ENCODE measurements at regions of chr14 and their contacts with region 1.

Region 1: GRCh38 chr14:78959674-78960264 is 789.6 kb downstream of the NRXN3 start:
- DNase-seq: peak; percentile 49 to 86
- H3K4me3 ChIP-seq: no peak overlapping the region
- H3K27ac ChIP-seq: no peak overlapping the region
- H3K4me1 ChIP-seq: no peaks in the 10 kb centered on the region
- H3K27me3 ChIP-seq: no peaks in the 10 kb centered on the region
- CTCF ChIP-seq: peak; percentile 99

Region 2: GRCh38 chr14:78974691-78975090 is 14.9 kb after region 1 on chr14:
- CTCF ChIA-PET with region 1: interaction called, 11 read pairs
- POLR2A ChIA-PET with region 1: no interaction called
- intact Hi-C with region 1: no loop called
- DNase-seq: peak in 1 of 2 experiments; percentile 83
- H3K4me3 ChIP-seq: no peak overlapping the region
- H3K27ac ChIP-seq: 0 out of 2 replicates have a peak overlapping the region, but pooled peaks have one; percentile 5
- H3K4me1 ChIP-seq: peaks cover 11% of the 10 kb centered on the region
- H3K27me3 ChIP-seq: no peaks in the 10 kb centered on the region
- CTCF ChIP-seq: no peak

Region 3: DNA sequence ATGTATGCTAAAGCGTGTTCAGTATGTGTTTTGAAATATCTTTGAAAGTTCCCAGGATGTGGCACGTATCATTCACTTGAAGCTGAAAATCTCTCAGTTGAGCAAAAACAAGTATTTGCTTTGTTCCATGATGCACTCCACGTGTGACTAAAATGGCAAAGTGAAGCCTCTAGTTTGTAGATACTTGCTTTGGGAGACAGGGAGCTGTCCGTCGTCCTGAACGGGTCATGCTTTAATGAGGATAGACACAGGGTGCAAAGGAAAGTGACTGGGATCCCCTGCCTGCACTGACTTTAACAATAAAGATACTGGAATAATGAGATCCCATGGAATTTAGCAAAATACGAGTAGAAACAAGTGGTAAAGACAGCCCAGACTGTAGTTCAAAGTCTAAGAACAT is 201.8 kb after region 1 on chr14:
- CTCF ChIA-PET with region 1: no interaction called
- POLR2A ChIA-PET with region 1: no interaction called
- intact Hi-C with region 1: no loop called
- DNase-seq: peak in 1 of 2 experiments; percentile 1
- H3K4me3 ChIP-seq: no peak overlapping the region
- H3K27ac ChIP-seq: no peak overlapping the region
- H3K4me1 ChIP-seq: no peaks in the 10 kb centered on the region
- H3K27me3 ChIP-seq: no peaks in the 10 kb centered on the region
- CTCF ChIP-seq: no peak

Region 4: GRCh38 chr14:80784820-80785219 is 1825.1 kb after region 1 on chr14:
- CTCF ChIA-PET with region 1: no interaction called
- POLR2A ChIA-PET with region 1: interaction called, 10 read pairs
- intact Hi-C with region 1: no loop called
- DNase-seq: no peak
- H3K4me3 ChIP-seq: no peak overlapping the region
- H3K27ac ChIP-seq: no peak overlapping the region
- H3K4me1 ChIP-seq: no peaks in the 10 kb centered on the region
- H3K27me3 ChIP-seq: no peaks in the 10 kb centered on the region
- CTCF ChIP-seq: 0 out of 2 replicates have a peak, but pooled peaks have one; percentile 22

Region 5: GRCh38 chr14:80862983-80863382 is 1903.2 kb after region 1 on chr14:
- CTCF ChIA-PET with region 1: no interaction called
- POLR2A ChIA-PET with region 1: no interaction called
- intact Hi-C with region 1: loop called (anchors 5 kb)
- DNase-seq: no peak
- H3K4me3 ChIP-seq: no peak overlapping the region
- H3K27ac ChIP-seq: no peak overlapping the region
- H3K4me1 ChIP-seq: no peaks in the 10 kb centered on the region
- H3K27me3 ChIP-seq: no peaks in the 10 kb centered on the region
- CTCF ChIP-seq: peak; percentile 70

Measured in PC-9 (cell line).